Activated T-helper 1 cell treated with anti-CD3 and anti-CD28 coated beads, Interleukin-12 subunit alpha, Interleukin-12 subunit beta, Interleukin-2, Interleukin-4 antibody, amounts not matched to agents 30 ng/mL and 10 ng/mL and 1 ng/mL, durations not matched to agents 14 hours and 24 hours and 36 hours (primary cell): ENCODE measurements at regions of chr14 and their contacts with region 1.

Region 1: DNA sequence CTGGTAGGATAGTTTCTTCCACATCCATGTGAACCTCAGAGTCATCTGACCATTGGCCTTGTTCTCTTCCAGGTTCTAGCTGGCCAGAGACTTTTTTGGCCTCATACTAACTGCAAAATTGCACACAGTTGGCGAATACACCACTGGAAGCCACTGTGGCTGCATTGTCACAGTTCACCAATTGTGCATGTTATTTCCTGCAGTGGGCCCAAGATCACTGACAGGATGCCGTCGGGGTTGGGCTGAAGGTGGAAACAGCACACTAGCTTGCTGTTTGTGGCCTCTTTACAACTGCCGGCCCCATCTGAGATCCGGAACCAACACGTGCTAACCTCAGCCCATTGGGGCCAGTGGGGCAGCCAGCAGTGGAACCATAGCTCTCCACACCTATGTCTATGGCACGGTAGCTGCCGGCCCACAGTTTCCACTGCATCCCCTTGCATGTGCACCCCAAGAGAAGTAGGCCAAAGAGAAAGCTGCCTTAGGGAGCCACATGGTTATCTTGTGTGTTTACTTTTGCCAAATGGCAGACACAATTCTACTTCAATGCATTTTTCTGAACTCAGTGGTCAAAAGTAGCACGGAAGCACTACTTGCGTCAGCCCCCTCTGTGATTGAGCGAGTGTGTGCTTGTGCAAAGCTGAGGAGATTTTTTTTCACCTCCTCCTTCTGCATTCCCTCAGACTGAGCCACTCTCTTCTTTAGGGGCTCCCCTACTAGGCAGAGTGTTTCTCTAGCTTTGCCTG is 464.0 kb downstream of the RAD51B start:
- DNase-seq: peak; percentile 52
- H3K4me3 Mint-ChIP-seq: peak overlapping the region; percentile 40
- H3K27ac Mint-ChIP-seq: peak overlapping the region; percentile 92
- H3K4me1 Mint-ChIP-seq: peaks cover 57% of the 10 kb centered on the region
- H3K27me3 Mint-ChIP-seq: peaks cover 1% of the 10 kb centered on the region

Region 2: GRCh38 chr14:68232300-68233055 is 51.1 kb before region 1 on chr14:
- intact Hi-C with region 1: loop called (anchors 2 kb)
- DNase-seq: peak; percentile 9
- H3K4me3 Mint-ChIP-seq: no peak overlapping the region
- H3K27ac Mint-ChIP-seq: no peak overlapping the region
- H3K4me1 Mint-ChIP-seq: peaks cover 7% of the 10 kb centered on the region
- H3K27me3 Mint-ChIP-seq: no peaks in the 10 kb centered on the region

Region 3: DNA sequence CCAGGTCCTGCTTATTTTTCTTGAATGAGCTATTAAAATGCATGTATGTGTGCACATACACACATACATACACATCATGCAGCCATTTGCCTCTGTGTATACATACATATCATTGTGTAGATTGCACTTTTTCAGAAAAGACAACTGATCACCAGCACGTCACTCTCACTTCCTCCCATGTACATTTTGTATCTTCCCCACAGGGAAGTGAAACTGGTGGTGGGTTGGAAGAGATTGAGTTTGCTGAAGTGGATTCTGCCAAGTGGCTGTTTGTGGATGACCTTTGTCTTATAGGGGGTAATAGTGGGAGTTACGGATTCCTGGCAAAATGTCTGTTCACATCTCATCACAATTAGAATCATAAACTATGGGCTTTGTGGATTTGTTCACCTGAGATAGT is 15.4 kb before region 1 on chr14:
- intact Hi-C with region 1: loop called (anchors 2 kb)
- DNase-seq: no peak
- H3K4me3 Mint-ChIP-seq: no peak overlapping the region
- H3K27ac Mint-ChIP-seq: peak overlapping the region; percentile 42
- H3K4me1 Mint-ChIP-seq: peaks cover 28% of the 10 kb centered on the region
- H3K27me3 Mint-ChIP-seq: no peaks in the 10 kb centered on the region

Region 4: DNA sequence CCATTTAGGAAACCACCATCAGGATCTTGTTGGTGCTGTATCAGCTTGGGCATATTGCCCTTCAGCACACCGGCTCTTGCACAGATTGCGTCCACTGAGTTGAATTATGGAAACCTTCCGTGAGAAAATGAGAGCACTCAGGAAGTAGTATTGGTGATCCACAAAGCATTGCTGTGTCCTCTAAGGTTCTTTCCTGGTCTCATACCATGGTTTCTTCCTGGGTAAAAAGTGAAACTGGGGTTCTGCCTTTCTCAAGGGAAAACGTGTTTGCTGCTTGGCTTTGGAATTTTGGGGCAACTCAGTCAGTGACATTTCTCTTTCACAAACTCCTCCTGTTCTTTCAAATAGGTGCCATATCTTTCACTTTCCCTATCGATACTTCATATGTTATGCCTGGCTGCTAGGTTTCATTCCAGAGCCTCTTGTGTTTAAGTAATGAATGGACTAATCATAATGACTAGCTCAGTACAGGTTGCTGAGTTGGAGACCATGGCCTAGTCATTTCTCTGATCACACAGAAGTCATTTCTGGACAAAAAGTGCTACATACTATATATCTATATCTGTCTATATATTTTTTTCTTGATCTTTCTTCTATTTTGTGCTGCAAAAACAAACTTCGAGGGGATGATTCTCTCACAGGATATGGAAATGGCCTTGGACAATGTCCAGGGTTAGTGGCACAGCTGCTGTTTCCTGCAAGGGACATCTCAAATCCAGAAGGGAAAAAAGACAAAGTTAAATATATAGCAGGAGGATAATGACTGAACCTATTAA is 85.9 kb after region 1 on chr14:
- intact Hi-C with region 1: loop called (anchors 2 kb)
- DNase-seq: no peak
- H3K4me3 Mint-ChIP-seq: no peak overlapping the region
- H3K27ac Mint-ChIP-seq: peak overlapping the region; percentile 21
- H3K4me1 Mint-ChIP-seq: peaks cover 23% of the 10 kb centered on the region
- H3K27me3 Mint-ChIP-seq: no peaks in the 10 kb centered on the region

Region 5: DNA sequence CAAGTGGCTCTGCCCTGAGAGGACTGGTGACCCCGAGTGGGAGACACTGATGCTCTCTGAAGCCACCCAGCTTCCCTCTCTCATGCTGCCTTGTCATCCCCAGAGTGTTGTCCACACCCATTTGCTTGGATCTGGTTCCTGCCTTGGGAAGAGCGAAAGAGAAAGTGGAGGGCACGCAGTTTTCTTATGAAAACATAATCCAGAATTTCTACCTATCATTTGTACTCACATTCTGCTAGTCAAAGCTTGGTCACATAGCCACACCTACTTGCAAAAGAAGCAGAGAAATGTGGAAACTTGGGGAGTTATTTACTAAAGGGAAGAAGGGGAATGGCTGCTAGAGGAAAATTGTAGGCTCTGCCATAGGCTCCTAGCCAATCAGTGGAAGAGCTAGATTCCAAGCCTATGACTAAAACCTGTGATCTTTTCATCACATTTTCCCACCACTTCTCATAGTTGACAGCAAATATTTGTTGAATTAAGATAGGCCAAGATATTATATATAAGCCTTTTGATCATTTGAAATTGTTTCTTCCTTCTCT is 183.0 kb after region 1 on chr14:
- intact Hi-C with region 1: loop called (anchors 10 kb)
- DNase-seq: no peak
- H3K4me3 Mint-ChIP-seq: no peak overlapping the region
- H3K27ac Mint-ChIP-seq: no peak overlapping the region
- H3K4me1 Mint-ChIP-seq: peaks cover 33% of the 10 kb centered on the region
- H3K27me3 Mint-ChIP-seq: no peaks in the 10 kb centered on the region

Region 6: DNA sequence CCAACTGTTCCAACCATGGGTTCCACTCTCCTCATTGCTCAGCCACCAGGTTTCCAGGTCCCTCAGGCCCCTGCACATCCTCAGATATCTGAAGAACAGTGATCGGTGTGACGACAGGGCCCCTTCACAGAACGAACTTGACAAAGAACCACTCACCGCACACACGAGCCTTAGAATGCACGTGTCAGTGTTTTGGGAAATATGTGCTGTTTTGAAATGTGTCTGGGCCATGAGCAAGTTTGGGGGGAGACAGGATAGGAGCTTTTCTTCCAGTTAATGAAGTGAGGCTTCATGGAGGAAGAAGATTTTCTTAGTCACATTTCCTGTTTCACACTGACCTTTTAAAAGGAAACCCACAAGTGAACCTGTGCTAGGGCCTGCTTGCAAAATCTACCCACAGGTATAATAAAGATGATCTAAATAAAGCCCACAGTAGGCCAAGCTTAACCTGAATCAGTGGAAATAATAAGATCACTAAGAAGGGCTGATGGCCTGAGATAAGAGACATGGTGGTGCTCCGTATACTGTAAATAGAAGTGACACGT is 450.8 kb after region 1 on chr14:
- intact Hi-C with region 1: loop called (anchors 2 kb)
- DNase-seq: no peak
- H3K4me3 Mint-ChIP-seq: peak overlapping the region; percentile 16
- H3K27ac Mint-ChIP-seq: peak overlapping the region; percentile 77
- H3K4me1 Mint-ChIP-seq: peaks cover 67% of the 10 kb centered on the region
- H3K27me3 Mint-ChIP-seq: no peaks in the 10 kb centered on the region